HepG2 (cell line): ENCODE measurements at regions of chr10 and their contacts with region 1.

Region 1: DNA sequence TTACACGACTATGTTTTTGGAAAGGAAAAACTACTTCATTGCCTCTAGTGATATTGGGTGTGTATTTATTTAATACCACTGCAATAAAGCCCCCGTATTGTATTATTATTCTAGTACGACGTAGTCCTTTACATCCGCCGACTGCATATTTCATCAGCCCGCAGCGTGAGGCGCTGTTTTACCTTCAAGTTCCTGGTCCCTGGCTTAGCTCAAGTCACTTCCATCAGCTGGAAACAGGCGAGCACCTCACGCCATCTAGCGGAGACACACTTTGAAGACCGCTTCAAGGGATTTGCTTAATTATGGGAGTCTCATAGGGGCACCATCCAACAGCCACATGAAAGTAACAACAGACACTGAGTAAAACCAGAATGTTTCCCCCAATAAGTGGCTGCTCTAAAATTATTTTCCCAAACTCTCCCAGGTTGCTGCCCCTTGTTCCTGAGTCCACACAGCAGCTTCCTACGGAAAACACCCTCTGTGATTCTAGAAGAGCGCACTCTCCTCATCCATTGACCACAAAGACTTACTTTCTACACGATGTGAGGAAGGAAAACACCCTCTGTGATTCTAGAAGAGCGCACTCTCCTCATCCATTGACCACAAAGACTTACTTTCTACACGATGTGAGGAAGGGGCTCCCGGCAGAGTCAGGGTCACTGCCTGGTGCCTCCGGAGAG is 15.7 kb upstream of the ITIH2 start:
- DNase-seq: peak; percentile 95
- ATAC-seq: peak; percentile 66
- H3K4me3 ChIP-seq: peak overlapping the region in 2 of 3 experiments; percentile 17 to 47; a peak in 1 of 6 replicates
- H3K27ac ChIP-seq: peak overlapping the region; percentile 94
- H3K4me1 ChIP-seq: peaks cover 45% of the 10 kb centered on the region
- H3K27me3 ChIP-seq: no peaks in the 10 kb centered on the region; a peak in 1 of 5 replicates
- CTCF ChIP-seq: peak; percentile 95
- EP300 ChIP-seq: 0 out of 4 replicates have a peak, but pooled peaks of 1 of the 2 experiments have one; percentile 6
- POLR2A ChIP-seq: no peak
- RAD21 ChIP-seq: peak; percentile 91

Region 2: GRCh38 chr10:7533657-7534479 is 153.5 kb before region 1 on chr10:
- CTCF ChIA-PET with region 1: interaction called, 9 read pairs
- POLR2A ChIA-PET with region 1: interaction called, 22 read pairs
- in situ Hi-C with region 1: loop called (anchors 5 kb)
- intact Hi-C with region 1: loop called (anchors 1 kb)
- DNase-seq: no peak
- ATAC-seq: no peak; the same call in 2 of the 3 replicates
- H3K4me3 ChIP-seq: peak overlapping the region in 1 of 3 experiments; percentile 60; a peak in 1 of 6 replicates
- H3K27ac ChIP-seq: peak overlapping the region; percentile 63
- H3K4me1 ChIP-seq: peaks cover 20% of the 10 kb centered on the region
- H3K27me3 ChIP-seq: no peaks in the 10 kb centered on the region
- CTCF ChIP-seq: no peak
- EP300 ChIP-seq: no peak
- POLR2A ChIP-seq: no peak
- RAD21 ChIP-seq: no peak

Region 3: DNA sequence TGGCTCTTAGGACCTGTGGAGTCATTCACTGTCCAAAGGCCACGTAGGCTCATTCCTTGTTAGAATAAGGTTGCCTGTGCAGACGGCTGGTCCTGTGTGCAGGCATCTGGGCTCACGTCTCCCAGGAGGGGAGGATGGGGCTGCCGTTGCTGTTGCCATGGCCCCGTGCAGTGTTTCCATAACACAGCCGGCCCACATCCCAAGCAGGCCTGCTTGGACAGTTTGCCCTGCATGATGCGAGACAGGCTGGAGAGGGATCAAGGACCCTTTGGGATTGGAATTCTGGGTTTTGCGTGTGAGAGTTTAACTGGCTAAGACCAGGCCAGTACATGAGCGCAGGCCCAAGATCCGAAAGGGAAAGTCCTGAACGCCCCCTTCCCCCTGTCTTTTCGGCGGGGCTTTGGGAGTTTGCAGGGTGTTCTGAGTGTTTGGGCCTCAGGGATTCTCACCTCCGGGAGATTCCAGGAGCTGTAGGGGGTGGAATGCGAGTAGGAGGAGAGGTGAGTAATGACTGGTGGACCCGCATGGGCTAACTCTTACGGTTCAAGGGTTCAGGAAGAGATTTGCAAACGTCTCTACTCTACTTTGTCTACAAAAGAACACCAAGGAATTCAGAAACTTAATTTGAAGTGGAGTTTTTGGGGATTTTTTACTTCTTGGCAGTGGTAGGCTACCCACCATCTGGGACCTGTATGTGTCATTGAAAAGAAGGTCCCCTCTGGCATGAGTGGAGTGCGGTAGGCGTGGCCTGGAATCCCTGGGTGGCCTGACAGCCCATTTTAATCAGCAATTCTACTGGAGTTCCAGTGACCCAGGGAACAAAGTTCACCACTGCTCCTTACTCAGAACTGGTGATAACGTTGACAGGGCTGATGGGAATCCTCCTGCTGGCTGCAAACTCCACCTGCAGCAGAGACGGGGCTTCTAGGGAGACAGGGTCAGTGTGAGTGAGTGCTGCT is 146.0 kb before region 1 on chr10:
- CTCF ChIA-PET with region 1: no interaction called
- POLR2A ChIA-PET with region 1: interaction called, 11 read pairs
- in situ Hi-C with region 1: no loop called
- intact Hi-C with region 1: loop called (anchors 1 kb)
- DNase-seq: peak; percentile 93
- ATAC-seq: peak; percentile 92
- H3K4me3 ChIP-seq: peak overlapping the region; percentile 36 to 66 (median 47)
- H3K27ac ChIP-seq: peak overlapping the region; percentile 86
- H3K4me1 ChIP-seq: peaks cover 56% of the 10 kb centered on the region
- H3K27me3 ChIP-seq: no peaks in the 10 kb centered on the region
- CTCF ChIP-seq: peak; percentile 53
- EP300 ChIP-seq: peak; percentile 61 to 89
- POLR2A ChIP-seq: peak in 1 of 2 experiments; percentile 68; a peak in 2 of 4 replicates
- RAD21 ChIP-seq: peak; percentile 58; the same call in 1 of the 2 replicates

Region 4: GRCh38 chr10:7561216-7561893 is 126.0 kb before region 1 on chr10:
- CTCF ChIA-PET with region 1: no interaction called
- POLR2A ChIA-PET with region 1: interaction called, 10 read pairs
- in situ Hi-C with region 1: no loop called
- intact Hi-C with region 1: no loop called
- DNase-seq: peak; percentile 49
- ATAC-seq: peak; percentile 95
- H3K4me3 ChIP-seq: peak overlapping the region; percentile 7 to 56 (median 15)
- H3K27ac ChIP-seq: no peak overlapping the region
- H3K4me1 ChIP-seq: peaks cover 27% of the 10 kb centered on the region
- H3K27me3 ChIP-seq: no peaks in the 10 kb centered on the region
- CTCF ChIP-seq: peak; percentile 46
- EP300 ChIP-seq: no peak
- POLR2A ChIP-seq: no peak
- RAD21 ChIP-seq: no peak

Region 5: DNA sequence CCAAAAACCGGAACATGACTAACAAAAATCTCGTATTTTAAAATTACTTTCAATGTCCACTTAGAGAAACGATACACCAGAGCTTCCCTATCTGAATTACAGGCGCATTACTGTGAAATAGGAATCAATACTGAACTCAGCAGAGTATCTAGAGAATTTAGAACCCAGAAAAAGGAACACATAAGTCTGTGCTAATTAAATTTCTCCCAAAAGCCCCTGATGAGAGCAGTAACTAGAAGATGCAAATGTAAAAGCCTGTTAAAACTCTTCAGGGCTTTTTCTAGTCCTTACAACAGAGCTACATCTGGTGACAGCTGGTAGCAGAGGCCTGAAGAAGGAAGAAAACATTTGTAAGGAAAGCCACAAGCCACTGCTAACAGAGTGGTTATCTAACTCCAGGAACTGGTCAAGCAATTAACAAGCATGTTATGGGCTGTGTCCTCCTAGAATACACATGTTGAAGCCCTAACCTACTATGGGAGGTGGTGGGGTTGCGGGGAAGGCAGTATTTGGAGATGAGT is 44.8 kb before region 1 on chr10:
- CTCF ChIA-PET with region 1: no interaction called
- POLR2A ChIA-PET with region 1: no interaction called
- in situ Hi-C with region 1: no loop called
- intact Hi-C with region 1: no loop called
- DNase-seq: no peak
- ATAC-seq: no peak
- H3K4me3 ChIP-seq: no peak overlapping the region
- H3K27ac ChIP-seq: no peak overlapping the region
- H3K4me1 ChIP-seq: no peaks in the 10 kb centered on the region
- H3K27me3 ChIP-seq: no peaks in the 10 kb centered on the region
- CTCF ChIP-seq: no peak
- EP300 ChIP-seq: no peak
- POLR2A ChIP-seq: no peak
- RAD21 ChIP-seq: no peak

Region 6: DNA sequence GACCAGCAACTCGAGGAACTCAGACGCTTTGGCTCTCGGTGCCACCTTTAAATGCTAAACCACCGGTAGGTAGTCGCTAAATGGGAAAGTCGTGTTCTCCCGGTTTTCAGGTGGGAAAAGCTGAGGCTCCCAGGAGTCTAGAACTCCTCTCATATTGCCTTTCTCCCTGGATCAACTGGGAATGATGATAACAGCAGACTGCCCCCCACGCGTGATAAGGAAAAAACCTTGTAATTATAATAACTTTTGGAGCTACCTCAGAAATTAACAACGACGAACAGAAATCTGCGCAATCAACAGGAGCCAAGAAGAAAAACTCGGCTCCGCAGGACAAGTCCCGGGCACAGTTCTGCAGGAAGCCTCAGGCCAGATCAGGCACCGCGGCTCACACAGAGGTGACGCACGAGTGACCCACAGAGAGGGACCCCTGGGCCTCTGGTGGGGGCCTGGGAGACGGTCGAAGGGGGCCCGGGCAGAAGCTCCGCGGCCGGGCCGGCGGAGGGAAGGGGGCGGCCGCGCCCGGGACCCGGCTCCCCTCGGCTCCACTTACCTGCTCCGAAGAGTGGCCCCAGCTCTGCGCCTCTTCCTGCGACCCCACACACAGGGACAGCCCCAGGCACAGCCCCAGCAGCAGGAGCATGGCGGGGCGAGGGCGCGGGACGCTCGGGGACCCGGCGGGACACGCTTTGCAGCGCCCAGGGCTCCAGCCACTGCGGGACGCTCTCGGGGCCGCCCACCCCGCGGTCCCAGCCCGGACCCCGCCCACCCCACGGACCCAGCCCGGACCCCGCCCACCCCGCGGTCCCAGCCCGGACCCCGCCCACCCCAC is 20.9 kb before region 1 on chr10 and contains the start of gene ITIH5:
- CTCF ChIA-PET with region 1: no interaction called
- POLR2A ChIA-PET with region 1: interaction called, 18 read pairs
- in situ Hi-C with region 1: no loop called
- intact Hi-C with region 1: loop called (anchors 1 kb)
- DNase-seq: no peak
- ATAC-seq: peak; percentile 73
- H3K4me3 ChIP-seq: peak within 1 kb of the TSS; percentile 78 to 80 (median 78)
- H3K27ac ChIP-seq: no peak within 1 kb of the TSS
- H3K4me1 ChIP-seq: peaks cover 21% of the 10 kb centered on the region
- H3K27me3 ChIP-seq: peaks cover 0 to 23% of the 10 kb centered on the region in 2 experiments; a peak in 2 of 5 replicates
- CTCF ChIP-seq: no peak
- EP300 ChIP-seq: no peak
- POLR2A ChIP-seq: no peak
- RAD21 ChIP-seq: no peak
- total RNA-seq, gene ITIH5: 3.5 and 8.9 TPM in 2 replicates

Region 7: DNA sequence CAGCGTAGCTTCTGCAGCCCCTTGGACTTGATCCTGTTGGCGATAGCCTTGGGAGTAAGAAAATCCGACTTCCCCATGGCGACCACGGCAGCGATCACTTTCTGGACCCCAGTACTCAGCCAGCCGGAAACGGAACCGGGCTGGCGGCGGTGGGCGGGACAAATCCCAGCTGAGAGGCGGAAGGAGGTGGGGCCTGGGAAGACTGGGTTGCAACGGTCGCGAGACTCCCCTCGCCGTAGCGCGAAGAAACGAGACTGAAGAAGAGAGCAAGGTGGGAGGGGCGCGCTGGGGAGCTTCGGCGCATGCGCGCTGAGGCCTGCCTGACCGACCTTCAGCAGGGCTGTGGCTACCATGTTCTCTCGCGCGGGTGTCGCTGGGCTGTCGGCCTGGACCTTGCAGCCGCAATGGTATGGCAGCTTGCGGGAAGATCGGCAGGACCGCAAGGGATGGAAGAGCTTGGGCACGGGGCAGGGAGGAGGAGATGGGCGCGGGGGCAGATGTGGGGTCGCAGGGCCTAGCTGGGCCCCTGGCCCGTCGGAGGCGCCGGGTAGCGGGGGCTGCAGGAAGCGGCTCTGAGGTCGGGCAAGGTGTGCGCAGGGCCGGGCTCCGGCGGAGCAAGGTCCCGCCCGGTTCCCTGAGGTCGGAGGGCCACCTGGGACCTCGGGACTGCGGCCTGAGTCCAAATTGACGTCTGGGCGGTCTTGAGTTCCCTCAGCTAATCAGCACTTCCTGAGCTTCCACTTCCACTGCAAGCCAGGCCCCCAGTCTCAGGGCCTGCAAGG is 100.7 kb after region 1 on chr10 and contains the starts of genes ATP5F1C and KIN:
- CTCF ChIA-PET with region 1: no interaction called
- POLR2A ChIA-PET with region 1: interaction called, 11 read pairs
- in situ Hi-C with region 1: no loop called
- intact Hi-C with region 1: no loop called
- DNase-seq: peak; percentile 94
- ATAC-seq: peak; percentile 96
- H3K4me3 ChIP-seq: peak within 1 kb of the TSS; percentile 72 to 99 (median 96)
- H3K27ac ChIP-seq: peak within 1 kb of the TSS; percentile 87
- H3K4me1 ChIP-seq: peaks cover 62% of the 10 kb centered on the region
- H3K27me3 ChIP-seq: no peaks in the 10 kb centered on the region; a peak in 1 of 5 replicates
- CTCF ChIP-seq: no peak
- EP300 ChIP-seq: no peak
- POLR2A ChIP-seq: peak; percentile 90 to 96
- RAD21 ChIP-seq: peak; percentile 45
- total RNA-seq, gene ATP5F1C: 416 and 578 TPM in 2 replicates
- total RNA-seq, gene KIN: 23.2 and 34.6 TPM in 2 replicates